Caco-2 (cell line): ENCODE measurements at regions of chrX and their contacts with region 1.

Region 1: GRCh38 chrX:73076838-73077237 is 2.5 kb downstream of the PABPC1L2A start:
- DNase-seq: no peak
- H3K4me3 ChIP-seq: no peak overlapping the region
- H3K4me3 Mint-ChIP-seq: no peak overlapping the region
- H3K27ac Mint-ChIP-seq: no peak overlapping the region
- H3K4me1 ChIP-seq: no peaks in the 10 kb centered on the region
- H3K4me1 Mint-ChIP-seq: no peaks in the 10 kb centered on the region
- H3K27me3 ChIP-seq: no peaks in the 10 kb centered on the region
- H3K27me3 Mint-ChIP-seq: no peaks in the 10 kb centered on the region
- CTCF ChIP-seq: no peak

Region 2: GRCh38 chrX:72269671-72270251 is 807.1 kb before region 1 on chrX:
- CTCF ChIA-PET with region 1: no interaction called
- POLR2A ChIA-PET with region 1: no interaction called
- intact Hi-C with region 1: no loop called
- DNase-seq: no peak
- H3K4me3 ChIP-seq: no peak overlapping the region
- H3K4me3 Mint-ChIP-seq: no peak overlapping the region
- H3K27ac Mint-ChIP-seq: no peak overlapping the region
- H3K4me1 ChIP-seq: no peaks in the 10 kb centered on the region
- H3K4me1 Mint-ChIP-seq: peaks cover 7% of the 10 kb centered on the region
- H3K27me3 ChIP-seq: no peaks in the 10 kb centered on the region
- H3K27me3 Mint-ChIP-seq: no peaks in the 10 kb centered on the region
- CTCF ChIP-seq: no peak

Region 3: GRCh38 chrX:73262992-73263391 is 186.2 kb after region 1 on chrX:
- CTCF ChIA-PET with region 1: no interaction called
- POLR2A ChIA-PET with region 1: no interaction called
- intact Hi-C with region 1: loop called (anchors 10 kb)
- DNase-seq: peak in 1 of 2 experiments; percentile 0
- H3K4me3 ChIP-seq: no peak overlapping the region
- H3K4me3 Mint-ChIP-seq: no peak overlapping the region
- H3K27ac Mint-ChIP-seq: no peak overlapping the region
- H3K4me1 ChIP-seq: no peaks in the 10 kb centered on the region
- H3K4me1 Mint-ChIP-seq: no peaks in the 10 kb centered on the region
- H3K27me3 ChIP-seq: no peaks in the 10 kb centered on the region
- H3K27me3 Mint-ChIP-seq: peaks cover 3% of the 10 kb centered on the region
- CTCF ChIP-seq: peak in 1 of 2 experiments; percentile 0